ENCODE measurements at regions of chr1 and their contacts with region 1.

Region 1: DNA sequence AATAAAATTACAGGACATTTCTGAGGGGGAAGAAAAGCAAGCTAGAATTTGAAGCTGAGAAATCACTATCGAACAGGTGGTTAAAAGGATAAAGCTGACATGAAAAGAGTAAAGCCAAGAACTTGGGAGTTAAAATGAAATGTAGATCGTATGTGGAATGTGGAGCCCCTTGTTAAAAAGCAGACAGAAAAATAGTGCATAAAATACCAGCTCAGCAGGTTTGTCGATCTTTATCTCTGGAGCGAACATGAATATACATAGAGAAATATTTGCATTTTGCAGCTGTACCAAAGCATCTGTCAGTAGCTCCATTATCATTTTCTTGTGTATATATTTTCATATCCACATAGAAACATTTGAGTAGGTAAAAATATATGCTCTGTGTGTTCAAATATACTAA is 73.6 kb upstream of the CDC42BPA start:
- DNase-seq: no peak
- H3K4me3 ChIP-seq: no peak overlapping the region
- H3K27ac ChIP-seq: no peak overlapping the region
- H3K4me1 ChIP-seq: no peaks in the 10 kb centered on the region
- H3K27me3 ChIP-seq: no peaks in the 10 kb centered on the region
- CTCF ChIP-seq: no peak
- EP300 ChIP-seq: no peak
- POLR2A ChIP-seq: no peak

Region 2: DNA sequence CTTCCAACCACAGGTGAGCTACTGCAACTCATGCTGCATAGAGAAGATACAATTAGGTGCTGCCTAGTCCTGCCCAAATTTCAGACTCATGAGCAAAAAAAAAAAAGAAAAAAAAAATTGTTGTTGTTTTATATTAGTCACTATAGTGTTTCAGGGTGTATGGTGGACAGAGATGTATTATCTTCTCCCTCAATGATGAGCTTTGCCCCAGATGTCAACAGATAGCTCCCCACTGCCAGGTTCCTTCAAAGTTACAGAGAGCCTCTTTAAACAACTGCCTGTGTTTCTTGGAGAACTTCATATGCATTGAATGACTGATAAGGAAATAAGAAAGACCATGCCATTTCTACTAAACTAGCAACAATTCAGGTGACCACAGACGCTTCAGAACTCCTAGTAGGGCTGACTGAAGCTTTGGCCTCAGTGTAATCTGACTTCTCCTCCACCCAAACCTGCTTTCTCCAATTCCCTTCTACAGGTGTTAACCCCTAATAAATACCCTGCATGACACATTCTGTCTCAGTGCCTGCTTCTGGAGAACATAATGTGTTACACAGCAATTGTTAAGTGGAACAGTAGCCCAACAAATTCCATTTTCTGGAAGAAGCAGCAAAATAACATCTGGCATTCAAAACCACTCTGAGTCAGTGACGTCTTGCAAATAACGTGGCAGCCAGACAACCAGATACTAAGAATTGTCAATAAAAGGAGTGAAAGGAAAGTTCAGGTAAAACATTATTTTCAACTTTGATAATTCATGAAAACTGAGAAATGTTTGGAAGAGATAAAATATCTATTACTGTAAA is 221.3 kb before region 1 on chr1:
- intact Hi-C with region 1: loop called in 1 of 4 experiments (anchors 5 kb)
- DNase-seq: no peak
- H3K4me3 ChIP-seq: no peak overlapping the region
- H3K27ac ChIP-seq: no peak overlapping the region
- H3K4me1 ChIP-seq: no peaks in the 10 kb centered on the region
- H3K27me3 ChIP-seq: no peaks in the 10 kb centered on the region
- CTCF ChIP-seq: no peak
- EP300 ChIP-seq: no peak
- POLR2A ChIP-seq: no peak

Region 3: DNA sequence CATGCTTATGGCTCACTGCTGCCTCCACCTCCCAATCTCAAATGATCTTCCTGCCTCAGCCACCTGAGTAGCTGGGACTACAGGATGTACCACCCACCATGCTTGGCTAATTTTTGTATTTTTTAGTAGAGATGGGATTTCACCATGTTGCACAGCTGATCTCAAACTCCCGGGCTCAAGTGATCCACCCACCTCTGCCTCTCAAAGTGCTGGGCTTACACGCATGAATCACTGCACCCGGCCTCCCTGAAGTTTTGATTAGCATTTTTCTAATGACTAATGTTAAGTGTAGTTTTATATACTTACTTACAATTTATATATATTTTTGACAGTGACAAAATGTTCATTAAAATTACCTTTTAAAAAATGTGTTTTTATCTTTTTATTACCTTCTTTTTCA is 212.6 kb after region 1 on chr1:
- intact Hi-C with region 1: no loop called
- DNase-seq: no peak
- H3K4me3 ChIP-seq: no peak overlapping the region
- H3K27ac ChIP-seq: no peak overlapping the region
- H3K4me1 ChIP-seq: peaks cover 2% of the 10 kb centered on the region
- H3K27me3 ChIP-seq: no peaks in the 10 kb centered on the region
- CTCF ChIP-seq: no peak
- EP300 ChIP-seq: no peak
- POLR2A ChIP-seq: no peak

Measured in ovary (tissue), 10 donors.